Ovary (tissue), 10 donors: ENCODE measurements at regions of chr11 and their contacts with region 1.

Region 1: DNA sequence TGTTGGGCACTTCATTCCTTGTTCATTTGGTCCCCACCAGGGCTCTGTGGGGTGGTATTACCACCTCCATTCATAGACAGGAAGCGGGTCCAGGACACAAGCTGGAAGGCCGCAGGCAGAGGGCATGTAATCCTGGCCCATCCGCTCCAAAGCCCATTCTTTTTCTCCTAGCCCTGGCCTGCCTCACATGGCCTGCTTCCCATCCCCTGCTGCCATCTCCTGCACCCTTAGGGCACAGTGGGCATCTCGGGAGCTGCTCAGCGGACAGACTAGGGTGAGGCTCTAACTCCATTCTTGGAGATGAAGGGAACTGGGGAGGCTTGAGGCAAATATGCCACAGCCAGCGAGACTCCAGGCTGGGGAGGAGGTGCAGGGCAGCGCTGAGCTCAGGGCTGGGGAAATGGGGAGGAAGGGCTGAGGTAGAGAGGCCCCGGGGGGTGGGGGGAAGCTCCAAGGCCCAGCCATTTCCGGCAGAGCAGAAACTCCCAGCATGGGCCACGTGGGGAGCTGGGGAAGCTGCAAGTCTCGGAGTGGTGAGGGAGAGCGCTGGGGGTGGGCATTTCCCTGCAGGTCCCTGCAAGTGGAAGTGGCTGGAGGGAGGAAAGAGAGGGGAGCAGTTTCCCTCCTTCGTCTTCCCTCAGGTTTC is 14.3 kb upstream of the BCL9L start:
- DNase-seq: no peak
- H3K4me3 ChIP-seq: no peak overlapping the region
- H3K27ac ChIP-seq: no peak overlapping the region
- H3K4me1 ChIP-seq: no peaks in the 10 kb centered on the region
- H3K27me3 ChIP-seq: no peaks in the 10 kb centered on the region
- CTCF ChIP-seq: no peak
- EP300 ChIP-seq: no peak
- POLR2A ChIP-seq: no peak

Region 2: DNA sequence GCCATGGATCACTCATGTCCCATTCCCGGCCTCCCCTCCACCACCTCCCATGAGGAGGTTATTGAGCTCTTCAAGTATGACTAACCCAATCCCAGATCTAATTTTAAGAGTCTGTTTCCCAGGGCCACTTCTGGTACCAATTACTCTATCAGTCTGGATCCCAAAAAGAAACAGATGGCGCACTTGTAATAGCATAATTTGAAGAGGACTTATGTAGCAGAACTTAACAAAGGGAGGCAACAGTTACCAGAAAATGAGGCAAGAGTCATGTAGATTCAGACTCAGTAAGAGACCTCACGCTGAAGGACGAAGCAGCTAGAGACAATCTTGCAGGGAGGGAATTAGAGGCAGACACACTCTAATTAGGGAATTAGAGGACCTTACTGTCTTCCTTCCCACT is 196.0 kb before region 1 on chr11:
- intact Hi-C with region 1: no loop called
- DNase-seq: no peak
- H3K4me3 ChIP-seq: no peak overlapping the region
- H3K27ac ChIP-seq: no peak overlapping the region
- H3K4me1 ChIP-seq: peaks cover 1% of the 10 kb centered on the region
- H3K27me3 ChIP-seq: no peaks in the 10 kb centered on the region
- CTCF ChIP-seq: no peak
- EP300 ChIP-seq: no peak
- POLR2A ChIP-seq: no peak

Region 3: DNA sequence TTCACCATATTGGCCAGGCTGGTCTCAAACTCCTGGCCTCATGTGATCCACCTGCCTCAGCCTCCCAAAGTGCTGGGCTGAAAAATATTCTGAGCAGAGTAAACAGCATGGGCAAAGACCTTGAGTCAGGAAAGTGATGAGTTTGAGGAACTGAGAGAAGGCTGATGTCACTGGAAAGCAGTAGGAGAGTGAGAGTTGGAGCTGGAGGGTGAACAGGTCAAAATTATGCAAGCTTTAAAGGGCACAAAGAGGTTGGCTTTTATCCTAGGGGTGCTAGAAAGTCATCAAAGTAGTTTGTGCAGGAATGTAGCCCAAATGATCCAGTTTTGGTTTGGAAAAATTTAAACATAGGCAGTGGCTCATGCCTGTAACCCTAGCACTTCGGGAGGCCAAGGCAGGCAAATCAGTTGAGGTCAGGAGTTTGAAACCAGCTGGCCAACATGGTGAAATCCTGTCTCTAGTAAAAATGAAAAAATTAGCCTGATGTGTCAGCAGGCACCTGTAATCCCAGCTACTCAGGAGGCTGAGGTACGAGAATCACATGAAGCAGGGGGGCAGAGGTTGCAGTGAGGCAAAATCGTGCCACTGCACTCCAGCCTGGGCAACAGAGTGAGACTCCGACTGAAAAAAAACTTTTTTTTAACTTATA is 101.0 kb before region 1 on chr11:
- intact Hi-C with region 1: no loop called
- DNase-seq: no peak
- H3K4me3 ChIP-seq: no peak overlapping the region
- H3K27ac ChIP-seq: no peak overlapping the region
- H3K4me1 ChIP-seq: no peaks in the 10 kb centered on the region
- H3K27me3 ChIP-seq: no peaks in the 10 kb centered on the region
- CTCF ChIP-seq: no peak
- EP300 ChIP-seq: no peak
- POLR2A ChIP-seq: no peak

Region 4: GRCh38 chr11:118901494-118902335 is 38.4 kb before region 1 on chr11:
- intact Hi-C with region 1: loop called in 1 of 4 experiments (anchors 5 kb)
- DNase-seq: peak in 2 of 5 donors; percentile 17 to 34
- H3K4me3 ChIP-seq: no peak overlapping the region
- H3K27ac ChIP-seq: no peak overlapping the region
- H3K4me1 ChIP-seq: no peaks in the 10 kb centered on the region
- H3K27me3 ChIP-seq: no peaks in the 10 kb centered on the region
- CTCF ChIP-seq: no peak
- EP300 ChIP-seq: no peak
- POLR2A ChIP-seq: no peak